Motor neuron (in vitro differentiated cells): ENCODE measurements at regions of chr16 and their contacts with region 1.

Region 1: GRCh38 chr16:73047518-73048291 is at the start of gene ZFHX3:
- ATAC-seq: peak; percentile 68 to 85 (median 74)
- H3K4me3 ChIP-seq: peak within 1 kb of the TSS; percentile 39 to 63 (median 48)
- H3K27ac ChIP-seq: peak within 1 kb of the TSS; percentile 84 to 91
- H3K4me1 ChIP-seq: peaks cover 67 to 88% of the 10 kb centered on the region in 2 donors
- total RNA-seq, gene ZFHX3: 7.4 to 31.9 (median 21.7) TPM

Region 2: DNA sequence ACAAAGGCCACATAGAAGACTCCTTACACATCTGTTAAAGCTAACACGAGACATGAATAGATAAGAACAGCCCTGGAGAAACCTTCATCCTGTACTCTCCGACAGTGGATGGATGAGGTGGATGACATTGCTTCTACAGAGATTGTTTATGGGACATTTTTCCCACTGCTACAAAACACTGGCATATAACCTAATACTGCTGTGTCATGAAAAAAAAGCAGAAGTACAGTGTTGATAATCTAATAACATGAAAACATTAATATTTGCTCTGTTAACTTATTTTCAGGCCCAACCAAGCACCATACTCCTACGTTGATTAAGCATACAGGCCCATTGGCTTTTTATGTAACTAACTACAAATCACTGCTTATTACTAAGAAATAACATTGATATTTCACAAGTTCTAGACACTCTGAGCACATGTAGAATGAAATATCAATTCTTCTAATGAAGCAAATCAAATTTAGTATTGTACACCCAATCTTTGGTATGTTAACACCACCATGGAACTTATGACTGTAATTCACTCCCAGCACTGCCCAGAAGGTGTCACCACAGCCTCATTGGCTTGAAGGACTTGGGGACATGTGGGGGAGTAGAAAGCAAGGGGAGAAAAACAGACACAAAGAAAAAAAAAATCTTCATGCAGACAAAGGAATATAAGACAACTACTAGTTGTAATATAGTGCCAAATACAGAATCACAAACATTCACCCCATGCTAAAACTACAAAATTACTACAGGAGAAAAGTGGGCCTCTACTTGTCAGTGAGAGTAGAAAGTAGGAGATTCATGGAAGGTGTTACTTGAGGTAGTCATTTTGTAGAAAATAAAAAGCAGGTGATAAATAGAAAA is 545.7 kb before region 1 on chr16:
- in situ Hi-C with region 1: loop called in 1 of 9 experiments (anchors 25 kb)
- ATAC-seq: peak; percentile 77 to 94 (median 87)
- H3K4me3 ChIP-seq: no peak overlapping the region
- H3K27ac ChIP-seq: no peak overlapping the region
- H3K4me1 ChIP-seq: peaks cover 4 to 21% of the 10 kb centered on the region in 2 donors